CD4-positive, alpha-beta memory T cell (primary cell): ENCODE measurements at regions of chr3 and their contacts with region 1.

Region 1: GRCh38 chr3:172595641-172596393 is 72.6 kb upstream of the TNFSF10 start:
- DNase-seq: peak; percentile 50 to 72 (median 67)
- H3K4me3 ChIP-seq: peak overlapping the region in 1 of 2 donors; percentile 44
- H3K4me3 Mint-ChIP-seq: peak overlapping the region; percentile 77 to 93 (median 89)
- H3K27ac ChIP-seq: peak overlapping the region; percentile 54
- H3K27ac Mint-ChIP-seq: peak overlapping the region; percentile 79 to 96 (median 92)
- H3K4me1 ChIP-seq: peaks cover 48% of the 10 kb centered on the region
- H3K4me1 Mint-ChIP-seq: peaks cover 35 to 58% (median 48%) of the 10 kb centered on the region in 4 donors
- H3K27me3 ChIP-seq: no peaks in the 10 kb centered on the region
- H3K27me3 Mint-ChIP-seq: no peaks in the 10 kb centered on the region

Region 2: GRCh38 chr3:172052405-172052804 is 543.4 kb before region 1 on chr3:
- CTCF ChIA-PET with region 1: no interaction called
- POLR2A ChIA-PET with region 1: no interaction called
- intact Hi-C with region 1: no loop called
- DNase-seq: no peak
- H3K4me3 ChIP-seq: no peak overlapping the region
- H3K4me3 Mint-ChIP-seq: peak overlapping the region in 1 of 8 donors; percentile 12
- H3K27ac ChIP-seq: no peak overlapping the region
- H3K27ac Mint-ChIP-seq: peak overlapping the region in 2 of 7 donors; percentile 10 to 47
- H3K4me1 ChIP-seq: peaks cover 31% of the 10 kb centered on the region
- H3K4me1 Mint-ChIP-seq: peaks cover 26 to 46% (median 30%) of the 10 kb centered on the region in 4 donors
- H3K27me3 ChIP-seq: no peaks in the 10 kb centered on the region
- H3K27me3 Mint-ChIP-seq: no peaks in the 10 kb centered on the region

Region 3: DNA sequence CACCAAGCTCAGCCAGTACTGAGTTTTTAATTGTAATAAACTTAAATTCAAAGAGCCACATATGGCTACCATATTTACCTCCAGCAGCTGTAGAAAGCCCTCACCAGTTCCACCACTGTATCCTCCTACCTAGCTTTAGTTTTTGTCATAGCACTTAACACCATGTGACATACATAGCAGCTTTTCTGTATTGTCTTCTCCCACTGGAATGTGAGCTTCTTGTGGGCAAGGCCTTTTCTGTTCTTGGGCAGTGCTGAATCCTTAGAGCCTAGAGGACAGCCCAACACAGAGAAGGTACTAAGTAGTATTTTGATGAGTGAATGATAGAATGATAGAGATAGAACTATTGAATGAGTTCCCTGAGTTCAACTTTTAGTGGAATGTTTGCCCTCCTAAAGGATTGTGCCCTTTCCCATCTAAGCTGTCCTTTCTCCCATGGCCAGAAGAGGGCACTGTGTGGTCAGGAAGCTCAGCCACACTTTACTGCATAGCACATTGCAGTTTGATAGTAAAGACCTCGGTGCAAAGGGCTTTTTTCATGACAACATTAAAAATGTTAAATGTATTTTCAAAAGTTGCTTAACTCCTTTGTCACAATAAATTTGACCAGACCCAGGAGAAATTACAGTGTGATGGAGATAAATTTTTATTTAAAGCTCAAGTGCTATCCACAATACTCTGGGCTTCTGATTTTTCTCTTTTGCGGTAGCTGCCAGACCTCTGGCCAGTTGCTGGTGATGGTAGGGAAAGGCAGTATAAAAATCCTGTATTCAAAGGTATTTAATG is 263.4 kb before region 1 on chr3:
- CTCF ChIA-PET with region 1: interaction called, 11 read pairs
- POLR2A ChIA-PET with region 1: no interaction called
- intact Hi-C with region 1: loop called (anchors 2 kb)
- DNase-seq: peak; percentile 40 to 57 (median 47)
- H3K4me3 ChIP-seq: no peak overlapping the region
- H3K4me3 Mint-ChIP-seq: no peak overlapping the region
- H3K27ac ChIP-seq: no peak overlapping the region
- H3K27ac Mint-ChIP-seq: peak overlapping the region in 1 of 7 donors; percentile 15
- H3K4me1 ChIP-seq: no peaks in the 10 kb centered on the region
- H3K4me1 Mint-ChIP-seq: peaks cover 0 to 7% (median 3%) of the 10 kb centered on the region in 4 donors
- H3K27me3 ChIP-seq: no peaks in the 10 kb centered on the region
- H3K27me3 Mint-ChIP-seq: no peaks in the 10 kb centered on the region

Region 4: DNA sequence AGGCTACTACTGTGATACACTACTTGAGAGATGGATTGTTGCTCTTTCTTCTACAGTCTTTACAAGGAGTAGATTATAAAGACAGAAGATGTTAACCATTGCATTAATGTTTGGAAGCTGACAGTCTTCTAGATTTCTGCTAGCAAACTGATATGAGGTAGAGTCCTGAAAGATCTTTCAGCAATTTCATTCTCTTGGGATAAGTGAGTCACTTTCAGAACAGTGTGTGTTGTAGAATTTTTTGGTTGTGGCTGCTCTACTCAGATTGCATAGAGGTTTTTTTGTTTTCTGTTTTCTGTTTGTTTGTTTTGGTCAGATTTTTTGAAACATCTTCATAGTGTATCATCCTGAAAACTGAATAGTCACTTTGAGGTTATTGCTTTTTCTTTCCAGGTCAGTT is 89.7 kb before region 1 on chr3:
- CTCF ChIA-PET with region 1: interaction called, 174 read pairs
- POLR2A ChIA-PET with region 1: interaction called, 15 read pairs
- intact Hi-C with region 1: loop called (anchors 5 kb)
- DNase-seq: no peak
- H3K4me3 ChIP-seq: no peak overlapping the region
- H3K4me3 Mint-ChIP-seq: no peak overlapping the region
- H3K27ac ChIP-seq: no peak overlapping the region
- H3K27ac Mint-ChIP-seq: peak overlapping the region in 4 of 7 donors; percentile 19 to 76 (median 73)
- H3K4me1 ChIP-seq: peaks cover 13% of the 10 kb centered on the region
- H3K4me1 Mint-ChIP-seq: peaks cover 12 to 42% (median 24%) of the 10 kb centered on the region in 4 donors
- H3K27me3 ChIP-seq: no peaks in the 10 kb centered on the region
- H3K27me3 Mint-ChIP-seq: no peaks in the 10 kb centered on the region

Region 5: DNA sequence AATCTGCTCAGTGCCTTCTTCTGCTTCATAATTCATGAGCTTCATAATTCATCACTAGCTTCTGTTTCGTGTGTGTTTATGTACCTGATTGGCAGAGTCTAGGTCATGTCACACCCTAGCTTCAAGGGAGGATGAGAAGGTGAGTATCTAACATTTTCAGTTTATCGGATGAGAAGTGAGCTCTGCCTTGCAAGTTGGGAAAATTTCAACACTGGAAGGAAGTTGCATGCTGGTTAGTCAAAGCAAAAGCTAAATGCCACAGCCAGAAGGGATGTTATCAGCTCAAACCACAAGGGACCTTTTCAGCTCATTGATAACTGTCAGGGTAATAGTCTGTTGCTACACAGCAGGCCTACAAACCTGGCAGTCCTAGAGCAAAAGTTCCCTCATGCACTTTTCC is 65.3 kb before region 1 on chr3:
- CTCF ChIA-PET with region 1: interaction called, 37 read pairs
- POLR2A ChIA-PET with region 1: interaction called, 8 read pairs
- intact Hi-C with region 1: no loop called
- DNase-seq: peak in 4 of 5 donors; percentile 34 to 58 (median 48)
- H3K4me3 ChIP-seq: no peak overlapping the region
- H3K4me3 Mint-ChIP-seq: peak overlapping the region in 7 of 8 donors; percentile 19 to 81 (median 61)
- H3K27ac ChIP-seq: no peak overlapping the region
- H3K27ac Mint-ChIP-seq: peak overlapping the region; percentile 56 to 90 (median 74)
- H3K4me1 ChIP-seq: peaks cover 23% of the 10 kb centered on the region
- H3K4me1 Mint-ChIP-seq: peaks cover 17 to 31% (median 26%) of the 10 kb centered on the region in 4 donors
- H3K27me3 ChIP-seq: no peaks in the 10 kb centered on the region
- H3K27me3 Mint-ChIP-seq: no peaks in the 10 kb centered on the region

Region 6: GRCh38 chr3:172573422-172573821 is 22.4 kb before region 1 on chr3:
- CTCF ChIA-PET with region 1: interaction called, 18 read pairs
- POLR2A ChIA-PET with region 1: no interaction called
- intact Hi-C with region 1: no loop called
- DNase-seq: no peak
- H3K4me3 ChIP-seq: no peak overlapping the region
- H3K4me3 Mint-ChIP-seq: no peak overlapping the region
- H3K27ac ChIP-seq: no peak overlapping the region
- H3K27ac Mint-ChIP-seq: no peak overlapping the region
- H3K4me1 ChIP-seq: peaks cover 14% of the 10 kb centered on the region
- H3K4me1 Mint-ChIP-seq: peaks cover 20 to 26% (median 23%) of the 10 kb centered on the region in 4 donors
- H3K27me3 ChIP-seq: no peaks in the 10 kb centered on the region
- H3K27me3 Mint-ChIP-seq: no peaks in the 10 kb centered on the region

Region 7: GRCh38 chr3:172622916-172623700 is 27.3 kb after region 1 on chr3:
- CTCF ChIA-PET with region 1: interaction called, 79 read pairs
- POLR2A ChIA-PET with region 1: no interaction called
- intact Hi-C with region 1: no loop called
- DNase-seq: peak in 4 of 5 donors; percentile 21 to 37 (median 30)
- H3K4me3 ChIP-seq: no peak overlapping the region
- H3K4me3 Mint-ChIP-seq: peak overlapping the region in 1 of 8 donors; percentile 68
- H3K27ac ChIP-seq: no peak overlapping the region
- H3K27ac Mint-ChIP-seq: no peak overlapping the region
- H3K4me1 ChIP-seq: no peaks in the 10 kb centered on the region
- H3K4me1 Mint-ChIP-seq: peaks cover 0 to 4% (median 2%) of the 10 kb centered on the region in 4 donors
- H3K27me3 ChIP-seq: no peaks in the 10 kb centered on the region
- H3K27me3 Mint-ChIP-seq: no peaks in the 10 kb centered on the region

Region 8: DNA sequence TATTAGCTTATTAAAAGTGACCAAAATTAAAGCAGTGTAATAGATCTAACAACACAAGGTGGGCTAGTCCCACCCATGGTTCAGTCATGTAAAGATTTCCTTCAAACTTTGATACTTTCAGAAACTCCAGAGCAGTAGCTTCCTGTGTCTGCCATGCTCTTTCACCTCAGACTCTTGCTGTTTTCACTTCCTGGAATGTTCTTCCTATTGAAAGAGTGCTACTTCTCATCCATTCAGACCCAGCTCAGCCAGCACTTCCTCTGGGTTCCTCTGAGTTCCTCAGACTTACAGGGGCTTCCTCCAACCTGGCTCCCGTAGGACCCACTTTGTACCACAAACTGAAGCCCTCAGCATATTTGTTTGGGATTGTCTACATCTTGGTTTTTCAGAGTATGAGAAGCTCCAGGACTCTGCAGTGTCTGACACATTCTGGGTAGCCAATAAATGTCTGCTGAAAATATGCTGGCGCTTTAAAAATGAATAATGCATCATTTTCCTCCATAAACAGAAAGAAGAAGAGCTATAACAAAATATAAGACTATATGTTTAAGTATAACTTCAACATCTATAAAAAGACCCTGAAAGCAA is 97.0 kb after region 1 on chr3:
- CTCF ChIA-PET with region 1: no interaction called
- POLR2A ChIA-PET with region 1: no interaction called
- intact Hi-C with region 1: no loop called
- DNase-seq: no peak
- H3K4me3 ChIP-seq: no peak overlapping the region
- H3K4me3 Mint-ChIP-seq: no peak overlapping the region
- H3K27ac ChIP-seq: no peak overlapping the region
- H3K27ac Mint-ChIP-seq: no peak overlapping the region
- H3K4me1 ChIP-seq: peaks cover 6% of the 10 kb centered on the region
- H3K4me1 Mint-ChIP-seq: peaks cover 3 to 13% (median 7%) of the 10 kb centered on the region in 4 donors
- H3K27me3 ChIP-seq: no peaks in the 10 kb centered on the region
- H3K27me3 Mint-ChIP-seq: no peaks in the 10 kb centered on the region

Region 9: DNA sequence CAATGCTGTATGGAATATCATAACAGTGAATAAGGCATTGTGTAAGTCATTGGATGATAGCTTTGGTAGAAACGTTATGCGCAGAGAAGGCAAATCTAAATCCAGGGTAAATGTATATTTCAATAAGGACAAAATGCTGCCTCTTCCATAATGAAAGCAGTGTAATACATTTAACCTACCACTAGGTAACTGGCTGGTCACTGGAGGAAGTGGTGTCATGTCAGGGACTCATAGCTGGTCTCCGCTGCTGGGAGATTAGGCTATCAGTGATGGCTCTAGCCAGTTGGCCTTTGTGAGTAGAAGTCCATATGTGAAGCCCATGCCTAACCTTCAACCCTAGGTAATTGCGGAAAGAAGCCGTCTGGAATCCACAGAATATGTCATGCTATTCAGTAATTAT is 942.6 kb after region 1 on chr3:
- CTCF ChIA-PET with region 1: no interaction called
- POLR2A ChIA-PET with region 1: no interaction called
- intact Hi-C with region 1: no loop called
- DNase-seq: peak in 1 of 5 donors; percentile 31
- H3K4me3 ChIP-seq: no peak overlapping the region
- H3K4me3 Mint-ChIP-seq: no peak overlapping the region
- H3K27ac ChIP-seq: no peak overlapping the region
- H3K27ac Mint-ChIP-seq: no peak overlapping the region
- H3K4me1 ChIP-seq: no peaks in the 10 kb centered on the region
- H3K4me1 Mint-ChIP-seq: no peaks in the 10 kb centered on the region
- H3K27me3 ChIP-seq: no peaks in the 10 kb centered on the region
- H3K27me3 Mint-ChIP-seq: no peaks in the 10 kb centered on the region